GM13976 (cell line): ENCODE measurements at regions of chr1 and their contacts with region 1.

Region 1: DNA sequence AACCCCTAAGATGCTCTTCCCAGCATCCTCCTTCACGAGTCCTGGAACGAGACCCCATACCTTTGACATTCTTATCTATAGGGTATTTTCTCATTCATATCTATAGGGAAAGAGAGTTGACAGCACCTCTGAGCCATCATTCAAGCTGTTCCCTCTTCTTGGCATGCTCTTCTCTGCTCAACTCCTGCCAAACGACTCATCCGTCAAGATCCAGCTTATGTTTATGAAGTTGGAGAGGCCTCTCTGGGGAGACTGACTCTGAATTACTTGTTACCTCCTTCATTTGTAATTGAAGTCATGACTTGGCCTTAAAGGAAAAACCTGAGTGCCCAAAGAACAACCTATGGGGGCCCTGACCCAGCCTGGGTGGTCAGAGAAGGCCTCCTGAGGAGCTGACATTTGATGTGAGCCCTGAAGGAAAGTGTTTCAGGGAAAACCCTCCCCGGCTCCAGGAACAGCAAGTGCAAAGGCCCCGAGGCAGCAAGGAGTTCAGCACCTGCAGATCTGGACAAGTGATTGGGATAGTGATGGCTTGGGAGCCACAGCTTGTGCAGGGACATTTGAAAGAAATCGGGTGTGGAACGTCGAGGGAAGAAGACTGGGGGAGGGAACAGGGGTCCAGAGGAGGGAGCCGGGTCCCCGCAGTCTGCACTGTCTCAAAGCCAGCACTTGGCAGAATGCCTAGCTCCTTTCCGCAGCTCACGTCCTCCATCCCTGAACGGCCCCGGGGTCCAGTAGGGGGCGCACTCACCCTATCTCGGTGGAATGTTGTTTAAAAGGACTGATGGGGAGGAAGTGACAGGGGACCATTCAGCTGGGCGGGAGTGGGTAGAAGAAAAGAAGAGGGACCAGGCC is 14.0 kb upstream of the CDA start:
- DNase-seq: peak; percentile 87
- CTCF ChIP-seq: peak; percentile 77

Region 2: GRCh38 chr1:20430355-20431175 is 144.3 kb before region 1 on chr1:
- in situ Hi-C with region 1: no loop called
- DNase-seq: peak; percentile 74
- CTCF ChIP-seq: peak; percentile 73

Region 3: DNA sequence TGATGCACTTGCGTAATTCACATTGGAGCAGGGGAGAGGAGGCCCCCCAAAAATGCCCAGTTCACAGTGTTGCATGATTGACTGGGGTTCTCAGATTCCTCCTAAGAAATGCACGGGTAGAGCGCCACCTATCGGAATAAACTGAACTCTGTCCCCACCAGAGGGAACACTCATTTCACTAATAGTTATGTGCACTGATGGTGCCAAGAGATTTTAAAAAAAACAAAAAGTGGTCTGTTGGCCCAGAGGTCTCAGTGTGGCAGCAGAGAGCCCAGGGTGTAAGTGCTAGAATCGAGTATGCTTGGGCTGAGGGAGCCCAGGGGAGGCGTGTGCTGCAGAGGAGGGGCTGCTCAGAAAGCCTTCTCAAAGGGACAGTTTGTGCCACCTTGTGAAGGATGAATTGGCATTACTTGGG is 65.3 kb after region 1 on chr1:
- in situ Hi-C with region 1: loop called (anchors 10 kb)
- DNase-seq: peak; percentile 82
- CTCF ChIP-seq: peak; percentile 64

Region 4: DNA sequence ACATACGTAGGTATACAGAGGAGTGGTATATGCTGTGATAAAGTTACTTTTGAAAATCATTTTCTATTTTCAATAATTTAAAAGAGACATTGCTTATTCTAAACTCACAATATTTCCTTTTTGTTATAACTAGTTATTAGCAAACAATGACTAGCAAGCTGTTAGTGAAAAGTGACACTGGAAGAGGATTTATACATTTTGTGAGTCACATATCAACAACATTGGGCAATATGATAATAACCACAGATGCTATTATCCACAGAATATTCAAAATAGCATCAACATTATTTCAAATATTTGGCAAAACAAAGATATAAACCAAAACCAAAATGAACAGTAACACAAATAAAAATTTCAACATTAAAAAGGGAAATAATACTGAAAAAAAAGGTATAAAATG is 316.2 kb after region 1 on chr1:
- in situ Hi-C with region 1: no loop called
- DNase-seq: no peak
- CTCF ChIP-seq: no peak